ENCODE measurements at regions of chr11 and their contacts with region 1.

Region 1: DNA sequence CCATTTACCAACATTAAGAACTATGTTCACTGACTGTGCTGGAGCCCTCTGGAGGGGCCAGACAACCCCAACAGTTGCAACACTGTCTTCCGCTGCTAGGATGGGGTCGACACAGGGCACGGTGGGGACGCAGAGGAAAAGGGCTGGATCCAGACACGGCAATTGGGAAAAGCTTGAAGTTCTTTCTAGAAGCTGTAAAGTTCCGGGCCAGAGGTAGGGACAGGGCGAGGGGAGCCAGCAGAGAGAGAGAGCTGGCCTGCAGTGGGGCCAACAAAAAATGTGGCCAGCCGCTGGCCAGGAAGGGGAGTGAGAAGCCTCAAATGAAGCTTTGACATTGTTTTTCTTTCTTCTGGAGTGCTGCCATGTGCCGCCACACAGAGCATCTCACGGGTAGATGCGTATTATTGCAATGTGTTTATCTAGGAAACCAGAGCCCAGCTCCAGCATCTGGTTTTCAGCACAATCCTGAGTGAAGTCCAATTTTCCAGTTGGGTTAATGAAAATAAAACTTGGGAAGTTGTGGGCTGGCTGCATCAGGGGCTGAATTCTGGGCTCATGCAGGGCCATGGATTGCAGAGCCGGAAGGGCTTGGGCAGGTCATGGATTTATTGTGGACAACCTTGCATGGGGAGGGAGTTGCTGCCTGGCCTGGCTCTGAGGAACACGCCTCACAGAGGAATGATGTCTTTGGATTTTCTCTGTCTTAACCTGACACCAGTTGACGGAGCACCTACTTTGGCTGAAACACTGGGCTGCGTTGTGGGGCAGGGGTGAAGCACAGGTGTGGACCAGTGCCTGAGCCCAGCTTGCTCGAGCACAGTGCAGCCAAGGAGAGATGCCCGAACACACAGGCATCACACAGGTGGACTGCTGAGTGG is 67.6 kb upstream of the AMPD3 start:
- DNase-seq: peak; percentile 92
- ATAC-seq: peak; percentile 78
- H3K4me3 ChIP-seq: no peak overlapping the region
- H3K27ac ChIP-seq: peak overlapping the region; percentile 92
- H3K4me1 ChIP-seq: peaks cover 32% of the 10 kb centered on the region
- H3K27me3 ChIP-seq: no peaks in the 10 kb centered on the region
- CTCF ChIP-seq: no peak
- POLR2A ChIP-seq: no peak
- RAD21 ChIP-seq: no peak

Region 2: GRCh38 chr11:10293423-10294289 is 93.8 kb before region 1 on chr11 and contains the start of gene SBF2:
- CTCF ChIA-PET with region 1: no interaction called
- POLR2A ChIA-PET with region 1: interaction called, 10 read pairs
- dilution Hi-C with region 1: no loop called
- in situ Hi-C with region 1: no loop called
- intact Hi-C with region 1: no loop called
- DNase-seq: peak; percentile 96
- ATAC-seq: peak; percentile 79
- H3K4me3 ChIP-seq: peak within 1 kb of the TSS; percentile 85
- H3K27ac ChIP-seq: peak within 1 kb of the TSS; percentile 93
- H3K4me1 ChIP-seq: peaks cover 10% of the 10 kb centered on the region
- H3K27me3 ChIP-seq: no peaks in the 10 kb centered on the region
- CTCF ChIP-seq: no peak
- POLR2A ChIP-seq: peak; percentile 97
- RAD21 ChIP-seq: no peak
- total RNA-seq, gene SBF2: 45.8 and 51.8 TPM in 2 replicates